ENCODE measurements at regions of chr7 and their contacts with region 1.

Region 1: GRCh38 chr7:55977831-55978230 is 13.4 kb downstream of the NIPSNAP2 start:
- DNase-seq: peak; percentile 73
- H3K4me3 Mint-ChIP-seq: peak overlapping the region; percentile 67
- H3K27ac Mint-ChIP-seq: peak overlapping the region; percentile 88
- H3K4me1 Mint-ChIP-seq: peaks cover 19% of the 10 kb centered on the region
- H3K27me3 Mint-ChIP-seq: no peaks in the 10 kb centered on the region
- CTCF ChIP-seq: no peak

Region 2: GRCh38 chr7:55964261-55965099 is 13.4 kb before region 1 on chr7 and contains the start of gene NIPSNAP2:
- CTCF ChIA-PET with region 1: interaction called, 12 read pairs
- POLR2A ChIA-PET with region 1: interaction called, 40 read pairs
- intact Hi-C with region 1: no loop called
- DNase-seq: peak; percentile 49
- H3K4me3 Mint-ChIP-seq: peak within 1 kb of the TSS; percentile 70
- H3K27ac Mint-ChIP-seq: peak within 1 kb of the TSS; percentile 78
- H3K4me1 Mint-ChIP-seq: peaks cover 25% of the 10 kb centered on the region
- H3K27me3 Mint-ChIP-seq: no peaks in the 10 kb centered on the region
- CTCF ChIP-seq: peak; percentile 49
- total RNA-seq, gene NIPSNAP2: 57.9 and 62.8 TPM in 2 replicates